Activated naive CD4-positive, alpha-beta T cell treated with anti-CD3 and anti-CD28 coated beads for 36 hours (primary cell): ENCODE measurements at regions of chr11 and their contacts with region 1.

Region 1: DNA sequence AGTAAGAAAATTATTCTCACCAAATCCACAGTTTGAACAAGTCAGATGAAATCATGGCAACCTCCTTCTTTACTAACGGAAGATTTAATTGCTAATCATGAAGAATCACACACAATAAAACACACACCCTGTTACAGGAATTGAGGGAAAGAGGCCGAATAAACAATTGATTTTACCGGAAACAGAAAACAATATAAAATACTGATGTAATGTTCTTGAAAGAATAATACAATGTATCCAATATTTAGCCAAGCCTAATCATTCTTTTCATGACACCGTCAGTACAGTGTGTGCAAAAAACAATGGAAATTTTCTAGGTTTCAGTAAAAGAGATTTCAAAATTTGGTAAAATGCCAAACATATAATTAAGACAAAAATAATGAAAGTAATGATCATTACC is 23.4 kb downstream of the ASRGL1 start:
- DNase-seq: no peak
- H3K4me3 Mint-ChIP-seq: no peak overlapping the region
- H3K27ac Mint-ChIP-seq: no peak overlapping the region
- H3K4me1 Mint-ChIP-seq: no peaks in the 10 kb centered on the region
- H3K27me3 Mint-ChIP-seq: no peaks in the 10 kb centered on the region

Region 2: DNA sequence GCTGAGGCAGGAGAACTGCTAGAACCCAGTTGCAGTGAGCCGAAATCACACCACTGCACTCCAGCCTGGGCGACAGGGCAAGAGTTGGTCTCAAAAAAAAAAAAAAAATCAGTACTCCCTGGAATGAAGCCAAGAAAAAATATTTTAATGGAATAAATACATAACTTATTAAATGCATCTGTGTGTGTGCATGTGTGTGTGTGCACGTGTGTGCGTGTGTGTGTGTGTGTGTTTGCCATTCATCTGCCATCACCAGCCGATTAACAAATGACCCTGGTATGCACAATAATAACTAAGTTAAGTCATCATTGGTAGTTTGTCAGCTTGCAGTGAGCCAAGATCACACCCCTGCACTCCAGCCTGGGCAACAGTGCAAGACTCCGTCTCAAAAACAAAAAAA is 23.1 kb after region 1 on chr11:
- CTCF ChIA-PET with region 1: no interaction called
- intact Hi-C with region 1: loop called (anchors 2 kb)
- DNase-seq: no peak
- H3K4me3 Mint-ChIP-seq: no peak overlapping the region
- H3K27ac Mint-ChIP-seq: no peak overlapping the region
- H3K4me1 Mint-ChIP-seq: peaks cover 11% of the 10 kb centered on the region
- H3K27me3 Mint-ChIP-seq: no peaks in the 10 kb centered on the region